ENCODE measurements at regions of chr20 and their contacts with region 1.

Region 1: GRCh38 chr20:31547017-31547675 is 32.9 kb downstream of the HM13 start:
- DNase-seq: peak; percentile 90
- H3K4me3 Mint-ChIP-seq: peak overlapping the region; percentile 94
- H3K27ac Mint-ChIP-seq: peak overlapping the region; percentile 98
- H3K4me1 Mint-ChIP-seq: peaks cover 34% of the 10 kb centered on the region
- H3K27me3 Mint-ChIP-seq: no peaks in the 10 kb centered on the region

Region 2: DNA sequence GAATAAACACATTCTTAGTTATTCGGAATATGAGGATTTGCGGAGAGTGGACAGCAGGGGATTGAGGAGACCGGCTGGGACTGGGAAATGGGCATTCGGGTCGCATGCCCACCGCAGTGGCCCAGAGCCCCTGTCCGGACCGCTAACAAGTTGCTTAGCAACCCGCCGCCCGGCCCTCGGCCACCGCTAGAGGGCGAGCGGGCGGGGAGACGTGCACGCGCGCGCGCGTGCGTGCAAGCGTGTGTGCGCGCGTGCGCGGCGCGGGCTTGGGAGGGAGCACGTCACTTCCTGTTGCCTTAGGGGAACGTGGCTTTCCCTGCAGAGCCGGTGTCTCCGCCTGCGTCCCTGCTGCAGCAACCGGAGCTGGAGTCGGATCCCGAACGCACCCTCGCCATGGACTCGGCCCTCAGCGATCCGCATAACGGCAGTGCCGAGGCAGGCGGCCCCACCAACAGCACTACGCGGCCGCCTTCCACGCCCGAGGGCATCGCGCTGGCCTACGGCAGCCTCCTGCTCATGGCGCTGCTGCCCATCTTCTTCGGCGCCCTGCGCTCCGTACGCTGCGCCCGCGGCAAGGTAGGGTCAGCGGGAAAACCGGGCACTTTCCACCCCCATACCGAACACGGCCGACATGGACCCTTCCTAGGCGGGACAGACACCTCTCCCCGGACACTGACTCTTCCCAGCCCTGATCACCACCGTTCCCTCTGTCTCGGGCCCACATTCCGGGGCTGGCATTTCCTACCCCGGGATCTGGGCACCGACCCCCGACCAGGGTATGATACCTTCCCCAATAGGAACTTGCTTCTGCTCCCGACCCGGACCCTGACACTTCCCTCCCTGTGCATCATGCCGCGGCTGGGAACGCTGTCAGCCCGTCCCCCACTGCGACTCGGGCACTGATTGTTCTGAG is 32.7 kb before region 1 on chr20 and contains the start of gene HM13:
- CTCF ChIA-PET with region 1: no interaction called
- POLR2A ChIA-PET with region 1: no interaction called
- intact Hi-C with region 1: loop called (anchors 2 kb)
- DNase-seq: peak; percentile 92
- H3K4me3 Mint-ChIP-seq: no peak within 1 kb of the TSS
- H3K27ac Mint-ChIP-seq: peak within 1 kb of the TSS; percentile 59
- H3K4me1 Mint-ChIP-seq: peaks cover 9% of the 10 kb centered on the region
- H3K27me3 Mint-ChIP-seq: no peaks in the 10 kb centered on the region
- total RNA-seq, gene HM13: 110 to 111 TPM